WTC11 (cell line): ENCODE measurements at regions of chr5 and their contacts with region 1.

Region 1: GRCh38 chr5:66828548-66829357 is 232.6 kb downstream of the MAST4 start:
- DNase-seq: peak; percentile 45
- ATAC-seq: peak; percentile 91
- H3K4me3 Mint-ChIP-seq: peak overlapping the region; percentile 64
- H3K27ac Mint-ChIP-seq: peak overlapping the region; percentile 58
- H3K4me1 Mint-ChIP-seq: peaks cover 52% of the 10 kb centered on the region
- H3K27me3 Mint-ChIP-seq: peaks cover 4% of the 10 kb centered on the region
- CTCF ChIP-seq: no peak

Region 2: DNA sequence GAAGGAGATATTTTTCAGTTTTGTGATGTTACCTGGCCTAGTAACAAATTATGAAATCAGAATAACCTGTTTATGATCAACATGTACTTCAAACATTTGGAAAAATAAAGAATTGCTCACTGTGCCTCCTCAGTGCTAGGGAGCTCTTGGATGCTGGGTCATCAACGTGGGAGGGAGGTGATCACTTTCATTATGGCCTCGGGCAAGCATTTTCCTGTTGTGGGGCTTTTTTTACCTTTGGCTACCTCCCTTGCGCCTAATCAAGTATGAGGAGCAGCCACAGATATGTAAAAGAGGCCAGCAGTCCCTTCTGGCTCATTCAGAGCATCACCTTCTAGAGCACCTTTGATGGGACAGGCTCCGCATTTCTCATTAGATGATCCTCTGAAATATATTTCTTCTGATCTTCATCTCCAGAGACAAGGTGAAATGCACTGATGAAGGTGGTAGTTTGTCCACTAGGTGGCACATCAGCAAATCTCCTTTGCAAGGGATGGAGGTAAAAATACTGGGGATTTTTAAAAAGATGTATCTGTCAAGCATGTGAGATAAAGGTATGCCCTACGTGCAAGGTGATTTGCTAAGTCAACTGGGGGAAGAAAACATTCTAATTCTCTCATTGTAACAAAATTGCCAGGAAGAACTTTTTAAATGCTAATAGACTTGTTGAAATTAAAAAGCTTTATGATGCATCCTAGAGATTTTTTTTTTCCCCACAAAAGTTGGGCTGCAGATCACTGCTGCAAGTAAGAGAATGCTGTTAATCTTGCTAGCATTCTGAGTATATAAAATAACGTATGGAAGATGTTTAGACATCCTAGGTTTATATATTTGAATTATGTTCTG is 14.4 kb before region 1 on chr5:
- CTCF ChIA-PET with region 1: interaction called, 26 read pairs
- POLR2A ChIA-PET with region 1: no interaction called
- DNase-seq: peak; percentile 37
- ATAC-seq: peak; percentile 64
- H3K4me3 Mint-ChIP-seq: no peak overlapping the region
- H3K27ac Mint-ChIP-seq: no peak overlapping the region
- H3K4me1 Mint-ChIP-seq: peaks cover 36% of the 10 kb centered on the region
- H3K27me3 Mint-ChIP-seq: no peaks in the 10 kb centered on the region
- CTCF ChIP-seq: peak; percentile 55